ENCODE measurements at regions of chr7 and their contacts with region 1.

Region 1: GRCh38 chr7:83648464-83649241 is at the start of gene SEMA3E:
- DNase-seq: peak; percentile 27
- H3K4me3 Mint-ChIP-seq: peak within 1 kb of the TSS; percentile 81
- H3K27ac Mint-ChIP-seq: peak within 1 kb of the TSS; percentile 86
- H3K4me1 Mint-ChIP-seq: peaks cover 31% of the 10 kb centered on the region
- H3K27me3 Mint-ChIP-seq: no peaks in the 10 kb centered on the region
- CTCF ChIP-seq: no peak
- total RNA-seq, gene SEMA3E: 21.8 and 24.4 TPM in 2 replicates

Region 2: DNA sequence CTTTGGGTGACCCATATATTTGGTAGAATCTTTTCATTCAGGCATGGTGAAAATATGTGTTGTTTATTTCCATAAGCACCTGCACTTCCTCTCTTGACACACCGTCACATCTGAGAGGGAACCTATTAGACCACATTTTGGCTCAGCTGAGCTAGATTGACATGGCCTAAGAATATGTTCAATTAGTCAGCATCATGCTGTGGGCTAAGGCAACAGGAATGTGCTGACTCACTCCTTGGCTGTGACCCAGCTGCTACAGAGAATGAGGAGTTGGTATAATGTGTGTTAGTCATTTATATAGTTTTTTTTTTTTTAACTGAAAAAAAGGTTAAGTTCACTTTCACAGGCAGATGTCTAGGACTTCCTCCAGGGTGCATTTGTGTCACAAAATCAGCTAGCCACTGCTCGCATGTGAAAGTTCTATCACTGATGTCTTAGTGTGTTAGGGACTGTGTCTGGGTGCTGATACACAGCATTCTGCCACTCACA is 180.4 kb before region 1 on chr7:
- CTCF ChIA-PET with region 1: no interaction called
- intact Hi-C with region 1: loop called (anchors 2 kb)
- DNase-seq: peak; percentile 83
- H3K4me3 Mint-ChIP-seq: no peak overlapping the region
- H3K27ac Mint-ChIP-seq: peak overlapping the region; percentile 50
- H3K4me1 Mint-ChIP-seq: no peaks in the 10 kb centered on the region
- H3K27me3 Mint-ChIP-seq: no peaks in the 10 kb centered on the region
- CTCF ChIP-seq: no peak

Region 3: DNA sequence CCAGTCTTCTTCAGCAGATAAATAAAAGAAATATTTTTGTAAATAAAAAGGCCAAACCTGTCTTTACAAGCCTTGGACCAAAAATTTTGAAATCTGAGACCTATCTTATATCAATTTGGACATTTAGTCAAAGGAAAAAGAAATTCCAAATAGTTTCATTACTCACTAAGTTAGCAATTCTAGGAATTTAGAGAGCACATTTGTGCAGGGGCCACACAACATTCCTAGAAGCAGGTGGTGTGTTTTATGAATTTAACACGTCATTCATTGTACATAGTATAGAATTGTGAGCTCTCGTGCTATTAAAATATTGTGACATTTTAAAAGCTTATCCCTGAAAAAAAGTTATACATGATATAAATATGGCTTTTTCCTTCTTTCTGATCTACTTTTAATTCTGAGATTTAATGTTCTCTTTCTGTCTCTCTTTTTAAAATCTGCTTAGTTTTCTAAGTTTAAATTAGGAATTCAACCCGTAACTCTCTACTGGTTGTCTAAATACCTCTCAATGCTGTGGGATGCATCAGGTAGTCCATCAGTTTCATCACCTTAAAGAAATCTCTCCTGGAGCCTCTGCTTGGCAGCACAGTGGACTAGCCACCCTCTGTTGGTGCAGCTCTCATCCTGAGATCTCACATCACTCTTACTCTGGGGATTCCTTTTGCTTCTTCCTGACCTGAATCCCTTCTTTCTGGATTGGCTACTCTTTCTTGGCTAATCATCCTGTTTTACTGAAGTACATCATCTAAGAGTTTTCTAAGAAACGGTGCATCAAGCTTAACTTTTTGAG is 124.2 kb before region 1 on chr7:
- CTCF ChIA-PET with region 1: no interaction called
- intact Hi-C with region 1: loop called (anchors 5 kb)
- DNase-seq: no peak
- H3K4me3 Mint-ChIP-seq: peak overlapping the region; percentile 11
- H3K27ac Mint-ChIP-seq: peak overlapping the region; percentile 90
- H3K4me1 Mint-ChIP-seq: peaks cover 48% of the 10 kb centered on the region
- H3K27me3 Mint-ChIP-seq: no peaks in the 10 kb centered on the region
- CTCF ChIP-seq: no peak

Region 4: DNA sequence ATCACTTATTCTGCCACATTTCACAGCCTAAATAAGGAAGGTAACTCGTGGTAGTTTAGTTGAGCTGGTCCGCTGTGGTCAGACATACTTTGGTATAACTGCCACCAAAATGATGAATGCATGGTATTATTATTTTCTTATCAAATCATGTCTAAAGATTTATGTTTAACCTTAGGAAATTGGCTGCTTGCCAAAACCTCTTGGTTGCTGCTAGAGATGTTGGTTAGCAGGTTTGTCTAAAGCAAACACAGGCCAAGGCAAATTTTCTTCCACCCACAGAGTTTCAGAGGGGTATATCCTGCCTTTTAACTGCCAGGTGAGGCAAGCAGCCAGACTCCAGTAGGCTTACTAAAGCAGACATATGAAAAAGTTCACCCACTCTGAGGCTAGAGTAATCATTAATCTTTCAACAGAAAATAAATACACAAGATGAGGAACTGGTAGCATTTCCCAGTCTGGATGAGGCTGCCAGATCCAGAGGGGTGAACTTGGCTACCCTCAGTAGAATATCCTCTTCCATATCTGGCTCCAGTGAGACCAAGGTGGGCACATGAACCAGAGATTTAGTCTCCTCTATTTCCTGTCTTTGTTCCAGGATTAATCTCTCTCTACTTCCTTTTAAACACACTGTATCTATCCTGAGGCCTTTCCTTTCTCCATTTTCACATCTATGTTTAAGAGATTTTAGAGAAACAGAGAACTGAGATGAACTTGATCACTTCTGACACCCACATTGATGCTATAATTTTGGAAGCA is 101.0 kb before region 1 on chr7:
- CTCF ChIA-PET with region 1: no interaction called
- intact Hi-C with region 1: loop called (anchors 2 kb)
- DNase-seq: peak; percentile 74
- H3K4me3 Mint-ChIP-seq: peak overlapping the region; percentile 4
- H3K27ac Mint-ChIP-seq: peak overlapping the region; percentile 90
- H3K4me1 Mint-ChIP-seq: peaks cover 37% of the 10 kb centered on the region
- H3K27me3 Mint-ChIP-seq: no peaks in the 10 kb centered on the region
- CTCF ChIP-seq: no peak

Region 5: DNA sequence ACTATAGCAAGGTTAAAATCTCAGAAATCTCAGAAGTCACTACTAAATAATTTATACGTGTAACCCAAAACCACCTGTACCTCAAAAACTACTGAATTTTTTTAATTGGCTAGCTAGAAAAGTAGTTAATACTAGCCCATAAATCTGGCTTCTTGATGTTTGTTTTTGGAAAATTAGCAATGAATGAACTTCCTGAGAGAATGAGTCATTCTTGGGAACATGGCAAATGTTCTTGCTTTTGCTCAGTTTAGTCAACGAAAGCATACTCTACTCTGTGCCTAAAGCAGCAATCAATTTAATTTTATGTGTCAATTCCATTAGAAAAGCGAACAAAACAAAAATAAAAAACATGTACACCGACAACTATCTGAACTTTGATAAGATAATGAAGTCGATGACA is 68.9 kb before region 1 on chr7:
- CTCF ChIA-PET with region 1: no interaction called
- intact Hi-C with region 1: loop called (anchors 5 kb)
- DNase-seq: no peak
- H3K4me3 Mint-ChIP-seq: no peak overlapping the region
- H3K27ac Mint-ChIP-seq: peak overlapping the region; percentile 12
- H3K4me1 Mint-ChIP-seq: peaks cover 11% of the 10 kb centered on the region
- H3K27me3 Mint-ChIP-seq: no peaks in the 10 kb centered on the region
- CTCF ChIP-seq: no peak